Common myeloid progenitor, CD34-positive (primary cell): ENCODE measurements at regions of chr17 and their contacts with region 1.

Region 1: GRCh38 chr17:2416010-2416734 is 15.3 kb upstream of the MNT start:
- DNase-seq: peak; percentile 78 to 88 (median 82)
- H3K4me3 ChIP-seq: no peak overlapping the region
- H3K27ac ChIP-seq: no peak overlapping the region
- H3K4me1 ChIP-seq: no peaks in the 10 kb centered on the region
- H3K27me3 ChIP-seq: no peaks in the 10 kb centered on the region

Region 2: GRCh38 chr17:2392252-2393173 is 23.7 kb before region 1 on chr17:
- CTCF ChIA-PET with region 1: interaction called, 311 read pairs
- POLR2A ChIA-PET with region 1: interaction called, 4 read pairs
- DNase-seq: peak; percentile 93 to 97 (median 96)
- H3K4me3 ChIP-seq: peak overlapping the region; percentile 59 to 86 (median 68)
- H3K27ac ChIP-seq: peak overlapping the region; percentile 79 to 91
- H3K4me1 ChIP-seq: peaks cover 13 to 65% (median 61%) of the 10 kb centered on the region in 4 experiments
- H3K27me3 ChIP-seq: no peaks in the 10 kb centered on the region

Region 3: DNA sequence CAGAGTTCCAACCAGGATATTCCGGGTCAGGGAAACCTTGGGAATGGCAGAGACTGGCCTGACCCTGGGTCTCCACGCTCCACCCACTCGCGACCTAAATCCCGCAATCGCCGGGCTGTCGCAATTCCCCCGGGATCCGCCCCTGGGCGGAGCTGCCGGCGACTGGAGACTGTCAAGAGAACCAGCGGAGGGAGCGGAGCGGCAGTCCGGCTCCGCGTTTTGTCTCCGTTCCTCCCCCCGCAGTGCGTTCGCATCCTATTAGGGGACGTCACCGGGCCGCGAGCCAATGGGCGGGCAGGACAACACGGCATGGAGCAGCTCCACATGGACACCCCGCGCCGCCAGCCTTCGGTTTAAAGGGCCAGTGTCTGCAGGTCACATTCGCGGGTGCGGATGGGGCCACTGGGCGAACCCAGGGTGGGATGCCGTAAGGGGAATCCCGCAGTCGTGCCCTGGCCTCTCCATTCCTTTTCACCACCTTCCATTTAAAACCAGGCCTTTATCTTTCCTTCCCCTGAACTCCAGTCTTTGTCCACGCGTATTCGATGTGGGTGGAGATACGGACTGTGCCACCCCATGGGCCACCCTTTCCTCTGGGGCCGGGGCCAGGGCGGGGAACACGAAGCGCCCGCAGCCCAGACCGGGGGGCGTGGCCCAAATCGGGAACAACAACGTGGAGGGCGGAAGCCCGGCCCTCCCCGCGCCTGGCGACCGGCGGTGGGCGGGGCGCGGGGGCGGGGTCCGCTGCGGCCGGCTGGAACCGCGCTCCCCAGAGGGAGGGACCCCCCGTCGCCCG is 14.5 kb before region 1 on chr17:
- CTCF ChIA-PET with region 1: interaction called, 20 read pairs
- POLR2A ChIA-PET with region 1: interaction called, 3 read pairs
- DNase-seq: peak; percentile 99 to 100 (median 100)
- H3K4me3 ChIP-seq: peak overlapping the region; percentile 69 to 98 (median 94)
- H3K27ac ChIP-seq: peak overlapping the region; percentile 92 to 96
- H3K4me1 ChIP-seq: peaks cover 8 to 46% (median 39%) of the 10 kb centered on the region in 4 experiments
- H3K27me3 ChIP-seq: no peaks in the 10 kb centered on the region